ENCODE measurements at regions of chr18 and their contacts with region 1.

Region 1: DNA sequence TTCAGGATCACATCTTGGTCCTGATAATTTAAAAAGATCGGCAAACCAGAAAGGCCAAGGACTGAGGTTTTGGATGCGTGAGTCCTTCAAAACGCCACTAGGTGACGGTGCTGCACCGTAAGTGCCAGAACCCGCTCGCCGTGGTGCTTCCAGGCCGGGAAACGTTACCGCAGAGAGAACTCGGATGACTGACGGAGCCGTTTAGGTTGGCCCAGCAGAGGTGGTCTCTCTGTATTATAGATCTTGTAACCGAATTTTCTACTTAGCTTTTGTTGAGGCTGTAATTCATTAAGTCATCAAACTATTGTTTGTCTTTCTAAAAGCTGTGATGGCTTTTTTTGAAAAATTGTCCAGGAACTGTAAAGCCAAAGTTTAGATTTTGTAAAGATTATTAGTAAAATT is 39.8 kb upstream of the ADCYAP1 start:
- DNase-seq: peak; percentile 81
- H3K4me3 ChIP-seq: no peak overlapping the region
- H3K27ac ChIP-seq: no peak overlapping the region
- H3K4me1 ChIP-seq: no peaks in the 10 kb centered on the region
- H3K27me3 ChIP-seq: peaks cover 80% of the 10 kb centered on the region
- CTCF ChIP-seq: peak; percentile 96

Region 2: GRCh38 chr18:896315-896714 is 31.4 kb after region 1 on chr18:
- CTCF ChIA-PET with region 1: no interaction called
- POLR2A ChIA-PET with region 1: interaction called, 12 read pairs
- intact Hi-C with region 1: loop called (anchors 5 kb)
- DNase-seq: no peak
- H3K4me3 ChIP-seq: no peak overlapping the region
- H3K27ac ChIP-seq: no peak overlapping the region
- H3K4me1 ChIP-seq: no peaks in the 10 kb centered on the region
- H3K27me3 ChIP-seq: peaks cover 87% of the 10 kb centered on the region
- CTCF ChIP-seq: no peak

Region 3: DNA sequence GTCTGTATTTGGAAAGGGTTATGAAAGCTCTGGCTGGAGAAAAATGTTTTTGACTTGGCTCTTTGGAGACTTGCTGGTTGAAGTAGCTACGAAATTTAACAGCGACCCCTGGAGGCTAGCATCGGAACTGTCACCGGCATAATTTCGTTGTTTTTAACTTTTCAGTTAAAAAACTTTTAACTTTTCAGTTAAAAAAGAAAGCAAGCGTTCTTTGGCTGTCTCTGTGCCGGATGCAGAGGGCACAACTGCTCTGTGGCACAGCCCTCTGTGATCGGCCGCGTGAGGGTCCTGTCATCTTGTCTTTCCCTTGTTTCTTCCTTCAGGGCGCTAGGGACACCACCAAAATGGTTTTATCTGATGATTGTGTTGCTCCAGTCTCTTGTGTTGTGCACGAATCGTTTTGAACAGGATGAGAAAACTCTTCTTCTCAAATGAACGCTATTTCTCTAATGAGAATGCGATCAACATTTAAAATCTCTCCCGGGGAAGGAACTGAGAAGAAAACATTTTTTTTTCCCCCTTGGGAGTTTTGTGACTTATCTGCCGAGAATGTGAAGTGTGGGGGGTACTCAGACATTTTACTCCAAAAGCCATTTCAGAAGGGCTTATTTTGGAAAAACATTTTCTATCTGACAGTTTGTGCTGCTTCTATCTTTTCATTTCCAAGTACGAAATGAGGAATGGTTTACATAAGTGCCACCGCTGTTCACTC is 96.9 kb after region 1 on chr18:
- CTCF ChIA-PET with region 1: no interaction called
- POLR2A ChIA-PET with region 1: no interaction called
- intact Hi-C with region 1: loop called (anchors 5 kb)
- DNase-seq: peak; percentile 51
- H3K4me3 ChIP-seq: no peak overlapping the region
- H3K27ac ChIP-seq: no peak overlapping the region
- H3K4me1 ChIP-seq: no peaks in the 10 kb centered on the region
- H3K27me3 ChIP-seq: peaks cover 79% of the 10 kb centered on the region
- CTCF ChIP-seq: peak; percentile 96

Region 4: GRCh38 chr18:1585879-1586488 is 721.1 kb after region 1 on chr18:
- CTCF ChIA-PET with region 1: no interaction called
- POLR2A ChIA-PET with region 1: no interaction called
- intact Hi-C with region 1: loop called (anchors 10 kb)
- DNase-seq: peak; percentile 60
- H3K4me3 ChIP-seq: no peak overlapping the region
- H3K27ac ChIP-seq: no peak overlapping the region
- H3K4me1 ChIP-seq: no peaks in the 10 kb centered on the region
- H3K27me3 ChIP-seq: peaks cover 8% of the 10 kb centered on the region
- CTCF ChIP-seq: peak; percentile 72

Region 5: DNA sequence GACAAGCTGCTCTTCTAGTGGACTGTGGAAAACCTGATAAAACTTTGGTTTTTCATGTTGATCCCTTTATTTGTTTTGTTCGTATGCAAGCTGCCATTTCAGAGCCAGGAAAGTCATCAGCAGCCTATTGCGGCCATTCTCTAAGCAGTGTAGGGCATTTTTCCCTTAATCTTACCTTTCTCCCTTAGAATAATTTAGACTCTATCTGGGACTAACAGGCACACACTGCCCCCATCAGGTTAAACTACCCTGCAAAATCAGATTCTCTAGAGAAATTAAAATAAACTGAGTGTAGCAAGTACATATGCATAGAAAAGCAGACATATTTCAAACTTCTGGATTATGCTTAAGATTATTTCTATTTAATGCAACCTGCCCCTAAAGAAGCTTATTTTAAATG is 1359.0 kb after region 1 on chr18:
- CTCF ChIA-PET with region 1: no interaction called
- POLR2A ChIA-PET with region 1: no interaction called
- intact Hi-C with region 1: loop called (anchors 5 kb)
- DNase-seq: peak; percentile 32
- H3K4me3 ChIP-seq: no peak overlapping the region
- H3K27ac ChIP-seq: no peak overlapping the region
- H3K4me1 ChIP-seq: no peaks in the 10 kb centered on the region
- H3K27me3 ChIP-seq: peaks cover 31% of the 10 kb centered on the region
- CTCF ChIP-seq: peak; percentile 60